ENCODE measurements at regions of chr9 and their contacts with region 1.

Region 1: DNA sequence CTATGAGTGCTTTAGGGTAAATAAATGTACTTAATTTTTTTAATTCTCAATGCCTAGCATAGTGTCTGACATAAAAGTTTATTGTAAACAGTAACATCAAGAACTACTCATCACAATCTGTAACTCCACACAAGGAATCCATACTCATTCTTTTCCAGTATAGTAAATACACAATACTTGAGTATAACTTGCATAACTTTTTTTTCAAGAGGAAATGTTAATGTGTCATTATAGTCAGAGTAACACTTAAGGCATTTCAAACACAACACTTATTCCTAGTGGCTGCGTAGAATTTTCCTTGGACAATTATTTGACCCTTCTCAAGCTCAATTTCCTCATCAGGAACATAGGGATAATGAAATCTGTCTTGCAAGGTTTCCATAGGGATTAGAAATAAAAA is 584.3 kb downstream of the CAAP1 start:
- DNase-seq: no peak
- ATAC-seq: no peak
- H3K4me3 ChIP-seq: no peak overlapping the region
- H3K4me3 Mint-ChIP-seq: no peak overlapping the region
- H3K27ac ChIP-seq: no peak overlapping the region
- H3K27ac Mint-ChIP-seq: no peak overlapping the region
- H3K4me1 ChIP-seq: no peaks in the 10 kb centered on the region
- H3K4me1 Mint-ChIP-seq: no peaks in the 10 kb centered on the region
- H3K27me3 ChIP-seq: no peaks in the 10 kb centered on the region
- H3K27me3 Mint-ChIP-seq: no peaks in the 10 kb centered on the region

Region 2: DNA sequence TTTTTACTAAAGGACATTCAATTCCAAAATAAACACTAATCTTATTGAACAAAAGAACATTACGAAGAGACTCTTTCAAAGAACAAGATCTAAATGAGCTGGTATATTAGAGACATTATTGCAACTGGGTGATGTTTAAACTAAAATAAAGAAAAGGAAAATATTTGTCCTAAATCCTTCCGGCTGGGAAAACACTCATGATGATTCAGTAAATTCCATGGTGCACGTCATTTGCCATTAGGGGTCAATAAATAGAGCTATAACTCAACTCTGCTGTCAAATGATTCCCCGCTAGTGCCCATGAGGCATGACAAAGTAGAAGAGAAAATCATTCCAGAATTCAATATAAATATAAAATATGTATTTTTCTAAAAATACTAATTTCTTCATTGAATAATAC is 64.6 kb before region 1 on chr9:
- CTCF ChIA-PET with region 1: no interaction called
- POLR2A ChIA-PET with region 1: no interaction called
- intact Hi-C with region 1: loop called in 1 of 2 experiments (anchors 10 kb)
- DNase-seq: no peak
- ATAC-seq: no peak
- H3K4me3 ChIP-seq: no peak overlapping the region
- H3K4me3 Mint-ChIP-seq: no peak overlapping the region
- H3K27ac ChIP-seq: no peak overlapping the region
- H3K27ac Mint-ChIP-seq: no peak overlapping the region
- H3K4me1 ChIP-seq: no peaks in the 10 kb centered on the region
- H3K4me1 Mint-ChIP-seq: no peaks in the 10 kb centered on the region
- H3K27me3 ChIP-seq: no peaks in the 10 kb centered on the region
- H3K27me3 Mint-ChIP-seq: no peaks in the 10 kb centered on the region

Measured in naive thymus-derived CD4-positive, alpha-beta T cell (primary cell).